Dorsolateral prefrontal cortex (tissue), 120 donors: ENCODE measurements at regions of chr11 and their contacts with region 1.

Region 1: DNA sequence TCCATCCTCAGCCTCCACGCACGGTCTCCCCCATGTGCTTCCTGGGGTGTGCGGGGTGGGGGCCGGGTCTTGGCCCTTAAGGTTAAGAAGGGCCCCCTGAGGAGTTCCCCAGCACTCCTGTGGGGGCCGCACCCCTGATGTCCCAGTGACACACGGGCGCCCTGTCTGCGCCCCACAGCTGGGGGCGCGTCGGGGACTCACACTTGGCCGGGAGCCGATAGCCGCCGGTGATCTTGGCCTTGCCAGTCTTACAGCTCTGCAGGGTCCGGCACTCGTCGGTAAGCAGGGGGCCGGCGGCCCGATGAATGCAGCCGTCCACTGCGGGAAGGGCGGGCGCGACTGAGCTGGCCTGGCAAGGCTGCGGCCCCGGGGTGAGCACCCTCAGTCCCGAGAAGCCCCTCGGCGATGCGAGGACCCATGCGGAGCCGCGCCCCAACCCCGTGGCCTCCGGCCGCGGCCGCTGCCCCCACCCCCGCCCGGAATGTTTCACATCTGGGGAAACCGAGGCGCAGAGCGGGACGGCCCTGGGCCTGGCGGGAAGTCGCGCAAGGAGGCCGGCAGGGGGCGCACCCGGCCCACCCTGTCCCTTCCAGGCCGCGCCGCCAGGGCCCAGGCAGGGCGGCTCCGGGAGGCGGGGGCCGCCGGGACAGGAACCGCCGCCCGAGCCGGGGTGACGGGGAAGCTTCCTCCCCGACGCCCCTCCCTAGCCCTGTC is 13.9 kb downstream of the OTUB1 start:
- DNase-seq: peak in 7 of 10 donors; percentile 44 to 85 (median 61)
- H3K4me3 ChIP-seq: peak overlapping the region; percentile 7 to 63 (median 46)
- H3K27ac ChIP-seq: peak overlapping the region in 11 of 59 donors; percentile 3 to 72 (median 32)
- H3K27me3 ChIP-seq: no peaks in the 10 kb centered on the region
- CTCF ChIP-seq: peak; percentile 37 to 96 (median 80)

Region 2: DNA sequence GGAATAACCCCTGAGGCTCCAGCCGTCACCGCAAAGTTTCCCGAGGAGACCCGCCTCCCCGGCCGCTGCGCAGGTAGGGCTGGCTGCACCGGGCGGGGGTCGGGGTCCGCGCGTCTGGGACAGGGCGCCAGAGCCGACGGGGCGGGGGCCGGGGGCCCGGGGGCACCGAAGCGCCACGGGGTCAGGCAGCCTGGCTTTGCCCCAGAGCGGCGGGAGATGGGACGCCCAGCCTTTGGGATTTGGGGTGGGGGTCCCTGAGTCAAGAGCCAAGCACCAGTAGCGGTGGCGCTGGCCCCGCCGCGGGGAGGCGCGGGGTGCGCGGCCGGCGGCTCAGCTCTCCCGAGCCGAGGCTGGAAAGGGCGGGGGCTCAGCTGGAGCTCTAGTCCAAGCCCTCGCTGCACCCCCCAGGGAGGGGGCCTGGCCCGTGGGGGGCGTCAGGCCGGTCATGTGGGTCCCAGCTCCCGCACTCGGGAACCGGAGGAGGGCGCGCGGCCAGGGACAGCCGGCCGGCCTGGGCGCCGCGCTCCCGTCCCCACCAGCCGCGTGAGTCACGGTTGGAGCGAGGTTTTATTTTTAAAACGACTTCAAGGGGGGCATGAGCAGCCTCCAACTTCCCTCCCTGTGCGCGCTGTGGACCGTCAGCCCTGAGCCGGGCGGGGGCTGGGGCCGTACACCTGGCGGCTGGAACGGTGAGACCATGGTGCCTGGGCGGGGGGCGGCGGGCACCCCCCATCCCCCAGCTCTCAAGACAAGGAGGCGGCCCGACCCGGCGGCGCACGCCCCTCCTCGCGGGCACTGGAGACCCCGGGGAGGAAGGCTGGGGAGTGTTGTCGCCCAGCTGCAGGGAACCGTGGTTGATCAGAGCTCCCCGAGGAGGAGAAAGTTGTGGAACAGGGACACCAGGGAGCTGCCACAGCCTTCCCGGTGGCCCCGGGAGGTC is 36.2 kb after region 1 on chr11:
- intact Hi-C with region 1: loop called (anchors 2 to 5 kb)
- DNase-seq: peak in 7 of 10 donors; percentile 40 to 76 (median 53)
- H3K4me3 ChIP-seq: peak overlapping the region; percentile 54 to 92 (median 77)
- H3K27ac ChIP-seq: peak overlapping the region; percentile 49 to 96 (median 90)
- H3K27me3 ChIP-seq: no peaks in the 10 kb centered on the region
- CTCF ChIP-seq: peak in 16 of 56 donors; percentile 7 to 30 (median 18)